Dorsolateral prefrontal cortex (tissue), 120 donors: ENCODE measurements at regions of chr2 and their contacts with region 1.

Region 1: DNA sequence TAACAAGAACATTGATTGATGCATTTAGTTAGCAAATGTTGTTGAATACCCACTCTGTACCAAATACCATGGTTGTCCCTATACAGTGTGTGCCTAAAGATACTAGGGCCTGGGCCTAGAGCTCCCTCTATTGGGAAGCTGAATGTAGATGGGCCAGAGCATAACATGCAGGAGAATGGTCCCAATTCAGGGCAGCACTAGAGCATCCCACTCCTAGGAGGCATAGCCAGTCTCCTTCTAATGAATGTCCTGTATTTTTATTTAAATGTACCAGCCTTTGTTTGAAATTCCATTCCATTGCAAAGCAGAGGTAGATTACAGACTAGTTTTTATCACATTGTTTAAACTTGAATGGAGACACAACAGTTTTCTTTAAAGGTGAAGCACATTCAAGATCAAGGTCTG is 90.6 kb downstream of the FEZ2 start:
- DNase-seq: peak in 7 of 10 donors; percentile 12 to 68 (median 50)
- H3K4me3 ChIP-seq: no peak overlapping the region
- H3K27ac ChIP-seq: peak overlapping the region in 1 of 59 donors; percentile 7
- H3K27me3 ChIP-seq: no peaks in the 10 kb centered on the region
- CTCF ChIP-seq: peak; percentile 9 to 83 (median 69)

Region 2: GRCh38 chr2:36561237-36561944 is 54.0 kb after region 1 on chr2:
- intact Hi-C with region 1: loop called in 1 of 2 experiments (anchors 5 kb)
- DNase-seq: peak in 2 of 10 donors; percentile 49 to 53
- H3K4me3 ChIP-seq: no peak overlapping the region
- H3K27ac ChIP-seq: peak overlapping the region in 43 of 59 donors; percentile 2 to 89 (median 70)
- H3K27me3 ChIP-seq: no peaks in the 10 kb centered on the region
- CTCF ChIP-seq: no peak

Region 3: GRCh38 chr2:36663851-36664695 is 156.7 kb after region 1 on chr2:
- intact Hi-C with region 1: loop called in 1 of 2 experiments (anchors 10 kb)
- DNase-seq: peak in 2 of 10 donors; percentile 3 to 11
- H3K4me3 ChIP-seq: peak overlapping the region in 9 of 59 donors; percentile 10 to 40 (median 17)
- H3K27ac ChIP-seq: no peak overlapping the region
- H3K27me3 ChIP-seq: peaks cover 0 to 3% (median 0%) of the 10 kb centered on the region in 45 donors
- CTCF ChIP-seq: peak; percentile 66 to 92 (median 82)